PC-3 (cell line): ENCODE measurements at regions of chr11 and their contacts with region 1.

Region 1: DNA sequence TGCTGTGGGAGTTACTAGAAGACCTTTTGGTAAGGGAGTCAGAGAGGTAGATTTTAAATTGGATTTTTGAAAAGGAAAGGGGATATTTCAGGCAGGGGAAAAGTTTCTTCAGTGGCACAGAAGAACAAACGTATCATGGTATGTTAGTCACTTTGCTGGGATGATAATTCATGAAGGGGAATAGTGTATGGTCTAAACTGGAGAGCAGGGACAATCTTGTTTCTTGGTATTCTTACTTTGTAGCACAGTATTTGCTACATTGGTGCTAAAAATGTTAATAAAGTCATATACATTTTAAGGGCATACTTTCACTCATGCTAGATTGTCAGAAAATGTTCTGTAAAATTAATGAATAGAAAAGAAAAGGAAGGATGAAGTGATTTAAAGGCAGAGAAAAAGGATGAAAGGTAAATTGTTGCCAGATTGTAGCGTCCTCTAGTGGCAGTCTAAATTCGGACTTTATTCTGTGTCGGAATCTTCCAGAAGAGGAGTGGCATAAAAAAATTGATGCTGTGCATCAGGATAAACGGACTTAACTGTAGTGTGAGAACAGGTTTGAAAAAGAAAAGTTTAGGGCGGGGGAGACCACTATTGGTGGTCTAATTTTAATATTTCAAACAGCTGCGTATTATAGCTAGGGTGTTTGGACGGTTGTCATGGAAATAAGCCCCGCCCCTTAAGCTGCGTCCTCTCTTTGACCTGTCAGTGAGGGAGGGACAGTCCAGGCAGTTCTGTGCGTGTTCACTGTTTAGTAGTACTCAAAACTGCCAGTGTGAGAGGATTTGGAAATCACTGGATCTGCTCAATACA is at the start of gene BCO2:
- DNase-seq: peak; percentile 84
- ATAC-seq: peak; percentile 89
- H3K4me3 ChIP-seq: peak within 1 kb of the TSS; percentile 58
- H3K27ac ChIP-seq: no peak within 1 kb of the TSS
- H3K4me1 ChIP-seq: peaks cover 27% of the 10 kb centered on the region
- H3K27me3 ChIP-seq: no peaks in the 10 kb centered on the region
- CTCF ChIP-seq: peak; percentile 99
- total RNA-seq, gene BCO2: 1.6 and 2.9 TPM in 2 replicates

Region 2: GRCh38 chr11:112113539-112114457 is 61.2 kb before region 1 on chr11:
- CTCF ChIA-PET with region 1: interaction called, 10 read pairs
- POLR2A ChIA-PET with region 1: interaction called, 3 read pairs
- intact Hi-C with region 1: loop called (anchors 1 kb)
- DNase-seq: peak; percentile 79
- ATAC-seq: peak; percentile 79
- H3K4me3 ChIP-seq: no peak overlapping the region
- H3K27ac ChIP-seq: no peak overlapping the region
- H3K4me1 ChIP-seq: peaks cover 14% of the 10 kb centered on the region
- H3K27me3 ChIP-seq: no peaks in the 10 kb centered on the region
- CTCF ChIP-seq: peak; percentile 71

Region 3: GRCh38 chr11:112121981-112122615 is 52.9 kb before region 1 on chr11:
- CTCF ChIA-PET with region 1: no interaction called
- POLR2A ChIA-PET with region 1: no interaction called
- intact Hi-C with region 1: loop called (anchors 2 kb)
- DNase-seq: no peak
- ATAC-seq: no peak
- H3K4me3 ChIP-seq: no peak overlapping the region
- H3K27ac ChIP-seq: peak overlapping the region; percentile 95; the same call in 1 of the 2 replicates
- H3K4me1 ChIP-seq: peaks cover 37% of the 10 kb centered on the region
- H3K27me3 ChIP-seq: no peaks in the 10 kb centered on the region
- CTCF ChIP-seq: no peak

Region 4: DNA sequence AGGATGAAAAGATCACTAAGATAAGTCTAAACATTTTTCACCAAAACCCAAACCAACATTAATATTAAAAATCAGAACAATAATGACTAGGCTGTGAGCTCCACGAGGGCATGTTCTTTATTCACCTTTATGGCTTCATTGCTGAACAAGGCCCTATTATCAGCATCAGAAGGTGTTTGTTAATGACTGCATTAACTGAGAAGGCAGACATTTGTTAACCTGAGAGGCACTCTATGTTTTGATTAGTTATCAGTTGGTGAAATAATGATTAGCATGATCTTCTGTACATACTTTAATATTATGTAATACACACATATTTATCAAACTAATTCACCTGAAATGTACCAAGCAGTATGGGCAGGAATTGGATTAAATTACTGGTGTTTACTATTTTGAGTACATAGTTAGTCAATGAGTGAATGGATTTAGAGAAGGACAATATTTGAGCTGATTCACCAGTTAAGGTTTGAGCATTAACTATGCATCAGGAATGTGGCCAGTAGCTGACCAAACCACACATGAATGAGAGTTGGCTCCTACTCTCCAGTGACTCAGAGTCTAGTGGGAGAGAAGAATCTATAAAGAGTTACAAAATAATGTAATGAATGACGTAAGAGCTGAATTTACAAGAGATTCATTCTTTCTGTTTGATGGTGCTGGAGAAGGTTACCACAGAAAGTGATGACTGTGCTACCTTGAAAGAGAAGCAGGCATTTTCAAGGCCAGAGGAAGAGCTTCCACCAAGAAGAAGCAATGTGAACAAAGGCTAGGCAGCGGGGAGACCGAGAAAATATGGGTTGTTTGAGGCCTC is 17.8 kb before region 1 on chr11:
- CTCF ChIA-PET with region 1: interaction called, 6 read pairs
- POLR2A ChIA-PET with region 1: interaction called, 16 read pairs
- intact Hi-C with region 1: loop called (anchors 1 kb)
- DNase-seq: peak; percentile 100
- ATAC-seq: peak; percentile 97
- H3K4me3 ChIP-seq: 0 out of 2 replicates have a peak overlapping the region, but pooled peaks have one; percentile 15
- H3K27ac ChIP-seq: peak overlapping the region; percentile 92
- H3K4me1 ChIP-seq: peaks cover 61% of the 10 kb centered on the region
- H3K27me3 ChIP-seq: no peaks in the 10 kb centered on the region
- CTCF ChIP-seq: no peak

Region 5: DNA sequence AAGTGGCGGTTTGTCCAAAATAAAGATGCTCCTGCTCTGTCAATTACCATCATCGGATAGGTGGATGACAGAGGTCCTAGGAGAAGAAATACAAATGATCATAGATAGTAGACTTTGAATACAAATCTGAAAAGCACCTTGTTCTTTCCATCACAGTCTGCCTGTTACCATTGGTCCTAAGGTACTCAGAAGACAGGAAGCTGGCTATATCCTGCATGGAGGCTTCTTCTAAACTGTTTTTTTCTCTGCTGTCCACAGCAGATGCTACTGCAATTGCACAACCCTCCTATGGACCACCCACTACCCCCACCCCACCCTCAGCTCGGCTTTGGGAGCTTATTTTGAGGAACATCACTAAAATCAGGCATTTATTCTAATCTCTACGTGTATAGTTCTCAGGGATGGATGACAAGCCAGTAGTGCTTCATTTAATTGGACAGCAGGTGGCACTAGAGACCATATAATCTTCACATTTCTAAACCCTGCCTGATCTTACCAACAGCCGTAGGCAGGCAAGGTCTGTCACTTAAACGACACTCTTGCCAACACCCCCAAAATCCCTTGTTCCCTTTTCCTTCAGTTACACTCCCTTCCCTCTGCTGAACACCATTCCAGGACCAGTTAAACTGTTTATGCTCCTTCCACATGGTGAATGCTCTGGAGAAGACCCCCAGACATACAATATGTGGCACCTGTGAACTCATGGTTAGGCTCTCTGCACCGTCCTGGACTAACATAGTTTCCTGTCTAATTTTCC is 44.7 kb after region 1 on chr11:
- CTCF ChIA-PET with region 1: interaction called, 3 read pairs
- POLR2A ChIA-PET with region 1: no interaction called
- intact Hi-C with region 1: loop called (anchors 5 kb)
- DNase-seq: peak; percentile 88
- ATAC-seq: peak; percentile 85
- H3K4me3 ChIP-seq: no peak overlapping the region
- H3K27ac ChIP-seq: no peak overlapping the region
- H3K4me1 ChIP-seq: peaks cover 33% of the 10 kb centered on the region
- H3K27me3 ChIP-seq: no peaks in the 10 kb centered on the region
- CTCF ChIP-seq: peak; percentile 91